ENCODE measurements at regions of chr7 and their contacts with region 1.

Region 1: GRCh38 chr7:113774182-113774807 is 144.5 kb downstream of the PPP1R3A start:
- H3K4me3 ChIP-seq: no peak overlapping the region
- H3K27ac ChIP-seq: no peak overlapping the region
- H3K4me1 ChIP-seq: no peaks in the 10 kb centered on the region
- CTCF ChIP-seq: no peak

Region 2: GRCh38 chr7:113790025-113790424 is 15.7 kb after region 1 on chr7:
- CTCF ChIA-PET with region 1: interaction called, 10 read pairs
- POLR2A ChIA-PET with region 1: no interaction called
- H3K4me3 ChIP-seq: no peak overlapping the region
- H3K27ac ChIP-seq: no peak overlapping the region
- H3K4me1 ChIP-seq: no peaks in the 10 kb centered on the region
- CTCF ChIP-seq: no peak

Measured in HEK293 (cell line).